ENCODE measurements at regions of chr22 and their contacts with region 1.

Region 1: DNA sequence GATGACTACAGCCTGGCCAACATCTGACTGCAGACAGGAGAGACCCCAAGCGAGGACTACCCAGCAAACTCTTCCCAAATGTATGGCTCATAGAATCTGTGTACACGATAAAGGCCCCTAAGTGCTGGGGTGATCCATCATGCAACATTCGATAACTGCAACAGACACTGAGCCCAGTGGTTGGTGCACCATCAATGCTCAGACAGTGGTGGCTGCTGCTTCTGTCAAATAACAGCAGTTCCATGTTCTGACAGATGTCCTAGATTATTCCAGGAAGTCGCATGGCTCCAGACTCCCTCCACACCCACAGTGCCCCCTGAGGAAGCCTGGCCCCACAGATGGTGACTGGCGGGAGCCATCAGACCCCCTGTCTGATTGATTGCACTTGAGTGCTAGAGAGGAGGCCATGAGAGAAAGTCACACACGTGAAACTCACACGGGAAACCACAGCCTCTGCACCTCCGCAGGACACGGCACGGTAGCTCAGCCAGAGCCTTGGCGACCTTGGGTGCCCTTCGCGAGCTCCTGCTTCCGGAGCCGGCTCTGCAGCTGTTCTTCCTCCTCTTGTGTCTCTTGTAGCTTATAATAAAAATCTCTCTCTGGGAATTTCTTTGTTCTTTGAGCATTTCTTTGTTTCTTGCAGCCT is 1155.9 kb downstream of the TBC1D22A start:
- DNase-seq: peak; percentile 94
- H3K4me3 ChIP-seq: peak overlapping the region; percentile 55
- H3K27ac ChIP-seq: peak overlapping the region; percentile 97
- H3K4me1 ChIP-seq: peaks cover 68% of the 10 kb centered on the region
- CTCF ChIP-seq: peak; percentile 27; the same call in 1 of the 2 replicates

Region 2: DNA sequence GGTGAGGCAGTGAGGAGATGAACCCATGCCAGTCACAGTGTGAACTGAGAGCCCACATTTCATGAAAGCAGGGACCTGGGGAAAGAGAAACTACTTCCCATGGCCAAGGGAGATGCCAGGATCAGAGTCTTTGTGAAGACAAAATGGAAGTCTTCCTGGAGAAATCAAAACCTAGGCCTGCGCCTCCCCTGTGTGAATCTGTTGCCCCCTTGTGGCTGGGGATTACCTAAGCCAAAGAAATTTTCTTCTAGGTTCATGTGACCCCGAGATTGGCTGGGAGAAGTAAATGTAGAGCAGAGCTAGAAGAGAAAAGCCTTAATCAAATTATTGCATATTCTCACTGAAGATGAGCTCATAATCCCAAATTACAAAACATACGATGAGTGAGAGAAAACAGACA is 80.7 kb before region 1 on chr22:
- CTCF ChIA-PET with region 1: interaction called, 3 read pairs
- POLR2A ChIA-PET with region 1: no interaction called
- intact Hi-C with region 1: loop called (anchors 2 kb)
- DNase-seq: peak; percentile 65
- H3K4me3 ChIP-seq: no peak overlapping the region
- H3K27ac ChIP-seq: no peak overlapping the region
- H3K4me1 ChIP-seq: peaks cover 28% of the 10 kb centered on the region
- CTCF ChIP-seq: peak; percentile 86

Region 3: GRCh38 chr22:47872771-47873535 is 45.4 kb before region 1 on chr22:
- CTCF ChIA-PET with region 1: no interaction called
- POLR2A ChIA-PET with region 1: no interaction called
- intact Hi-C with region 1: loop called (anchors 5 kb)
- DNase-seq: no peak
- H3K4me3 ChIP-seq: no peak overlapping the region
- H3K27ac ChIP-seq: peak overlapping the region; percentile 64
- H3K4me1 ChIP-seq: peaks cover 38% of the 10 kb centered on the region
- CTCF ChIP-seq: no peak